K562 (cell line): ENCODE measurements at regions of chr3 and their contacts with region 1.

Region 1: DNA sequence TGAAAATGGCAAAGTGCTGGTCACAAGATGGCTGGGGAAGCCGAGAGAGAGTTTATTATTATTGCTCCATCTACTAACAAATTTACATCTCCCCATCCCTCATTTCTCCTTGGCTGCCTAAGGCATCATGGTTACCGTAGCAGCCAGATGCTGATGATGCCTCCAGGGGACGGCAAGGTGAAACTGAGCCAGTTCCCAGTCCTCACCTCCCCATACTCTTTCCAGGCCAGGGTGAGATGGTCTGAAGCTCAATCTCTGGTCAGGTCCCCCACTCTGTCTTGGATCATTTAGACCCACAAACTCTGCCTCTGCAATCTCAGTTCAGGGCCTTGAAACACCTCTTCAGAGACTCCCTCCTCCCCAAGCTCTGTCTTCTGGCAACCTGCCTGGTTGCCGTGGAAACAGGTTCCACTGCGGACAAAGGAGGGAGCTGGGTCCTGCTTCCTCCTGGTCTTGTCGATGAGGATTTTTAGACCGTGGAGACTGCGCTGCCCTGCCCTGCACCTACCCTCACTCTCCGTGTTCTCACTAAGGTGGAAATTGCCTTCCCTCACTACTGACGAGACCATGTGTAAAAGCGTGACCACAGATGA is at the start of gene RTP1:
- DNase-seq: no peak
- ATAC-seq: no peak
- H3K4me3 ChIP-seq: no peak within 1 kb of the TSS
- H3K27ac ChIP-seq: no peak within 1 kb of the TSS
- H3K4me1 ChIP-seq: peaks cover 0 to 6% of the 10 kb centered on the region in 2 experiments; a peak in 1 of 5 replicates
- H3K27me3 ChIP-seq: peaks cover 17 to 51% of the 10 kb centered on the region in 2 experiments
- CTCF ChIP-seq: no peak
- EP300 ChIP-seq: no peak
- POLR2A ChIP-seq: no peak
- RAD21 ChIP-seq: no peak
- polyA plus RNA-seq, gene RTP1: not detected

Region 2: DNA sequence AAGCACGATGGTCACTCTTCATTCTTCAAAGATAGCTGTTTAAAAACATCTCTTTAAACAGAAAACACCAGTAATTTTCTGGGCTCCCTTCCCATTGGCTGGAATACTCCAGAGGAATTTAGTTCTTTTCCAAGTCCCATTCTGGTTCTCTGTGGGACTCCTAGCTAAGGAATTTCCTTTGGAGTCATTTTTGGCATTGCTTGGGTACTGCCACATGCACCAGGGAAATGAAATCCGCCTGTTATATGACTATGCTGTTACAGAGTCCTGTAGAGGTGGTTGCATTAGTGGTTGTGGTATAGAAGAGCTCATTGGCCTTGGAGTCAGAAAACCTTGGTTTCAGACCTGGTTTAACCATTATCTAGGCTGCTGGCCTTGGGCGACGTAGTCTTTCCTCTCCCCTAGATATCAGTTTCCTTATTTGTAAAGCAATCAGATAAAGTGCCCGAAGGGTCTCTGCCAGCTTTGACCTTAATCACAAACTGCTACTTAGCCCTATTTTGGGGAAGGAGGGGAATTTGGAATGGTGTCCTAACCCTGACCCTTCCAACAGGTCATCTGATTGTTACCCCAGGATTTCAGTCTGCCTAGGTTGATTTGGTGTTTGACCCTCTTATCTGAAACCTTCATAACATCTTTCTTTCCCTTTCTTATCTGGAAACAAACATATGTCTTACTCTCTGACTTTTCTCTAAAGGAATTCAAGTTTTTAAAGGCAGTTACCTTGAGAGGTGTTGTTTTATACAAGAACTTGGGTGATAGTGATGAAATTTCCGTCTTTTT is 13.6 kb after region 1 on chr3:
- CTCF ChIA-PET with region 1: no interaction called
- POLR2A ChIA-PET with region 1: interaction called, 10 read pairs
- in situ Hi-C with region 1: no loop called
- intact Hi-C with region 1: no loop called
- DNase-seq: peak; percentile 20 to 33 (median 24)
- ATAC-seq: no peak; the same call in 2 of the 3 replicates
- H3K4me3 ChIP-seq: no peak overlapping the region
- H3K27ac ChIP-seq: no peak overlapping the region
- H3K4me1 ChIP-seq: peaks cover 0 to 7% of the 10 kb centered on the region in 2 experiments; a peak in 2 of 5 replicates
- H3K27me3 ChIP-seq: peaks cover 9 to 19% of the 10 kb centered on the region in 2 experiments; a peak in 4 of 5 replicates
- CTCF ChIP-seq: no peak
- EP300 ChIP-seq: peak; percentile 75
- POLR2A ChIP-seq: no peak
- RAD21 ChIP-seq: no peak